ENCODE measurements at regions of chr2 and their contacts with region 1.

Region 1: GRCh38 chr2:15177103-15177502 is 384.0 kb downstream of the NBAS start:
- DNase-seq: peak; percentile 6 to 87 (median 61)
- ATAC-seq: peak; percentile 87
- H3K4me3 ChIP-seq: no peak overlapping the region
- H3K4me3 Mint-ChIP-seq: peak overlapping the region; percentile 21
- H3K27ac ChIP-seq: no peak overlapping the region
- H3K27ac Mint-ChIP-seq: peak overlapping the region; percentile 79
- H3K4me1 ChIP-seq: peaks cover 14% of the 10 kb centered on the region
- H3K4me1 Mint-ChIP-seq: peaks cover 32% of the 10 kb centered on the region
- H3K27me3 ChIP-seq: no peaks in the 10 kb centered on the region
- H3K27me3 Mint-ChIP-seq: no peaks in the 10 kb centered on the region
- CTCF ChIP-seq: no peak

Region 2: DNA sequence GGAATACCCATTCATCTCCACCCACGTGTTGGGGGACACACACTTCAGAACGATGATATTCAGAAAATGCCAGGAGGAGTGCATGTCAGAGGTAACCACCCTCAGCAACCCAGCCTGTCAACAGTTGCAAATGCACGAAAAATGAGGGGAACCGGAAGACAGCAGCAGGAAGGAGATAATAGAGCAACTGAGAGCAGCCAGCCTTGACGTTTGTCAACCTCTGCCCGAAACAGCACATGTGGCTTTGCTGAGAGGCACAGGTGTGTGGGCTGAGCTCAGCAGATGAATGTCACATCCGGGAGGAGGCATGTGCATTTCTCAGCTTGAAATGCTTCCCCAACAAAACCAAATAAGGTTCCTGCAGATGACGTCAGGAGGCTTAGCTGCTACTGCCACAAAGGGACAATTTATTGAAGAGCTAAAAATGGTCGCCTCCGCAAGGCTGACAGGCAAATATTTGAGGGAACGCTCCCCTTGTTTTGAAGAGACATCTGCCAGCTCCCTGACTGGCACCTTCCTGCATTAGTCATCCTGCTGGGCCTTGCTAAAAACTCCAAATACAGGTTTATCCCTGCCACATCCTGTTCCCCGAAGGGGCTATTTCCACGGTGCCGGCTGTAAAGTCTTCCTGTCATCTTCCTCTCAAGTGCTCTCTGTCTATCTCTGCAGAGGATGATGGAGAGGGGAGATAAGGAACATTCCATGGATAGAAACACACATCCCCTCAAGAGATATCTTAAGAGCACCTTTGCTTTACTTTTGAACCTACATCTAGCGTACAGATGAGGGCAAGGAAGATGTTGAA is 34.8 kb before region 1 on chr2:
- CTCF ChIA-PET with region 1: no interaction called
- POLR2A ChIA-PET with region 1: no interaction called
- intact Hi-C with region 1: loop called in 1 of 2 experiments (anchors 1 kb)
- DNase-seq: peak; percentile 34 to 87 (median 58)
- ATAC-seq: peak; percentile 98
- H3K4me3 ChIP-seq: peak overlapping the region in 1 of 2 experiments; percentile 2
- H3K4me3 Mint-ChIP-seq: peak overlapping the region; percentile 19
- H3K27ac ChIP-seq: peak overlapping the region; percentile 14 to 55
- H3K27ac Mint-ChIP-seq: peak overlapping the region; percentile 86
- H3K4me1 ChIP-seq: peaks cover 17% of the 10 kb centered on the region
- H3K4me1 Mint-ChIP-seq: peaks cover 20% of the 10 kb centered on the region
- H3K27me3 ChIP-seq: no peaks in the 10 kb centered on the region
- H3K27me3 Mint-ChIP-seq: no peaks in the 10 kb centered on the region
- CTCF ChIP-seq: no peak

Region 3: DNA sequence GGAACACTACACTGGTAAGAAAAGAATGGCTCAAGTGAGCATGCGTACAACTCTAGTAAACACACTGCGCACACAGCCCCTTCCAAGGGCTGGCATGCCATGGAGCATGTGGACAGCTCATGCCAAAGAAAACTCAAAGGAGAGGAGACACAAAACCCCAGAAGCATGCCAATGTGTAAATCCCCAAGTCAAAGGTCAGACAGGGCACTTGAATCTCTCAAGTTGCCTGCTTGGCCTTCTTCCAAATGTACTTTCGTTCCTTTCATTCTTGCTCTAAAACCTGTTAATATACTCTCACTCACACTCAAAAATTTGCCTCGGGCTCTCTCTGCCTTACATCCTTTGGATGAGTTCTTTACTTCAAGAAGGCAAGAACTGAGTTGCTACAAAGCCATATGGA is 18.7 kb after region 1 on chr2:
- CTCF ChIA-PET with region 1: no interaction called
- POLR2A ChIA-PET with region 1: no interaction called
- intact Hi-C with region 1: no loop called
- DNase-seq: no peak
- ATAC-seq: no peak
- H3K4me3 ChIP-seq: no peak overlapping the region
- H3K4me3 Mint-ChIP-seq: no peak overlapping the region
- H3K27ac ChIP-seq: no peak overlapping the region
- H3K27ac Mint-ChIP-seq: no peak overlapping the region
- H3K4me1 ChIP-seq: no peaks in the 10 kb centered on the region
- H3K4me1 Mint-ChIP-seq: no peaks in the 10 kb centered on the region
- H3K27me3 ChIP-seq: no peaks in the 10 kb centered on the region
- H3K27me3 Mint-ChIP-seq: no peaks in the 10 kb centered on the region
- CTCF ChIP-seq: no peak

Measured in CD8-positive, alpha-beta T cell (primary cell).